K562 (cell line): ENCODE measurements at regions of chr16 and their contacts with region 1.

Region 1: GRCh38 chr16:56332464-56333079 is 92.8 kb downstream of the AMFR start:
- DNase-seq: peak; percentile 62 to 81 (median 69)
- ATAC-seq: peak; percentile 96
- H3K4me3 ChIP-seq: no peak overlapping the region
- H3K27ac ChIP-seq: no peak overlapping the region
- H3K4me1 ChIP-seq: peaks cover 0 to 22% of the 10 kb centered on the region in 2 experiments; a peak in 1 of 5 replicates
- H3K27me3 ChIP-seq: peaks cover 26 to 71% of the 10 kb centered on the region in 2 experiments; a peak in 3 of 5 replicates
- CTCF ChIP-seq: peak; percentile 79 to 84 (median 81)
- EP300 ChIP-seq: no peak
- POLR2A ChIP-seq: no peak
- RAD21 ChIP-seq: peak; percentile 76 to 92

Region 2: DNA sequence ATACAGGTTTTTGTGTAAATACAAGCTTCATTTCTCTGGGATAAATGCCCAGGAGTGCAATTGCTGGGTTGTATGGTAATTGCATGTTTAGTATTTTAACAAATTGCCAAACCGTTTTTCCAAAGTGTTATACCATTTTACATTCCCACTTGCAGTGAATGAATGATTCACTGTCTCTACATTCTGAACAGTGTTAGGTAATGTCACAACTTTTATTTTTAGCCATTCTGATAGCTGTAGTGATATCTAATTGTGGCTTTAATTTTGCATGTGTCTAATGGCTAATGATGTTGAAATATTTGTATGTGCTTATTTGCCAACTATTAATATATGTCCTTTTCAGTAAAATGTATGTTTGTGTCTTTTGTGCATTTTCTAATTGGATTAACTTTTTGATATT is 300.5 kb before region 1 on chr16:
- CTCF ChIA-PET with region 1: no interaction called
- POLR2A ChIA-PET with region 1: no interaction called
- in situ Hi-C with region 1: no loop called
- intact Hi-C with region 1: no loop called
- DNase-seq: no peak
- ATAC-seq: no peak
- H3K4me3 ChIP-seq: no peak overlapping the region
- H3K27ac ChIP-seq: no peak overlapping the region
- H3K4me1 ChIP-seq: no peaks in the 10 kb centered on the region
- H3K27me3 ChIP-seq: no peaks in the 10 kb centered on the region
- CTCF ChIP-seq: no peak
- EP300 ChIP-seq: no peak
- POLR2A ChIP-seq: no peak
- RAD21 ChIP-seq: no peak

Region 3: DNA sequence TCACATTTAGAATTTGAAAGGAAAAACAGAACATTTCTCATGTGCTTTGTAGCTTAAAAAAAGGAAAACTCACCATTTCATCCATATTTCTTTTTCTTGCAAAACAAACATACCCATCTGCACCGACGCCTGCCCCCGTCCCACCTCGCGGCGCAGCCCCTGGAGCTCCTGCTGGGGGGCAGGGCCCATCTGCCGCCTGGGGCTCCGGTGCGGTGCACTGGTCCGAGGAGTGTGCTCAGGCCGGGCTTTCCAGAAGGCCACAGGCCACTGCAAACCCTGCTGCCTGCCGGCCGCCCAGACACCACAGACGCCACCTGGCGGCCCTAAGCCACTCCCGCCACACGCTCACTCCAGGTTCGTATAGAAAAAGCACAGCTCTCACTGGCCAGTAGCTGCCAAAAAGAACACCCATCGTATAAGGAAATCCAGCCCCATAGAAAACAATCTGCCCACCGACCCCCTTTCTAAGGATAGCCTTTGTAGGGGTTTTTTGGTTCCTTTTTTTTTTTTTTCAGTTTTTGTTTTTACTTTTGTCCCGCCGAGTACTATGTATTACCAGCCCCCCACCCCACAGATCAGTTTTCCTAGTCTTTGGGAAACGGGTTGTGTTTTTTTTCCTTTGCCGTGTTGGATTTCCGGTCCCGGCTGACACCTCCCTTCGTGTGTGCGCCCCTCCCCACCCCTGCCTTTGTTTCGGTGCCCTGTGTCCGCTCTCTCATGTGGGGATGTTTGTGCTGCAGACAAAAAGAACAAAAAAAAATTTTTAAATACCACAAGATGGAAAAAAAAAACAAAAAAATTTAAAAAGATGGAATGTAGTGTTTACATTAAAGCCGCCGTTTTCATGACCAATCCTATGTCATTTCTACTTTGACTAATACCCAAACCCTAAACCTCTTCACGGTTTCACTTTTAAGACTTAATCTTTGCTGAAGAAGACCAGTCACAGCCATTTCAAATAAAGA is 24.0 kb after region 1 on chr16:
- CTCF ChIA-PET with region 1: interaction called, 20 read pairs
- POLR2A ChIA-PET with region 1: no interaction called
- in situ Hi-C with region 1: no loop called
- intact Hi-C with region 1: loop called (anchors 1 kb)
- DNase-seq: peak; percentile 80 to 88 (median 84)
- ATAC-seq: peak; percentile 98
- H3K4me3 ChIP-seq: no peak overlapping the region
- H3K27ac ChIP-seq: peak overlapping the region; percentile 47; the same call in 2 of the 3 replicates
- H3K4me1 ChIP-seq: peaks cover 11 to 28% of the 10 kb centered on the region in 2 experiments
- H3K27me3 ChIP-seq: peaks cover 3 to 12% of the 10 kb centered on the region in 2 experiments; a peak in 3 of 5 replicates
- CTCF ChIP-seq: peak; percentile 88 to 94 (median 92)
- EP300 ChIP-seq: no peak
- POLR2A ChIP-seq: no peak
- RAD21 ChIP-seq: peak; percentile 72 to 80

Region 4: GRCh38 chr16:56425439-56425832 is 92.9 kb after region 1 on chr16 and contains the start of gene AMFR:
- CTCF ChIA-PET with region 1: no interaction called
- POLR2A ChIA-PET with region 1: no interaction called
- in situ Hi-C with region 1: no loop called
- intact Hi-C with region 1: loop called (anchors 5 kb)
- DNase-seq: peak; percentile 87 to 93 (median 92)
- ATAC-seq: peak; percentile 92
- H3K4me3 ChIP-seq: peak within 1 kb of the TSS; percentile 90
- H3K27ac ChIP-seq: peak within 1 kb of the TSS; percentile 85
- H3K4me1 ChIP-seq: peaks cover 23 to 37% of the 10 kb centered on the region in 2 experiments
- H3K27me3 ChIP-seq: no peaks in the 10 kb centered on the region
- CTCF ChIP-seq: peak in 2 of 3 experiments; percentile 57 to 82; a peak in 4 of 6 replicates
- EP300 ChIP-seq: no peak
- POLR2A ChIP-seq: no peak
- RAD21 ChIP-seq: peak in 1 of 2 experiments; percentile 52; a peak in 2 of 4 replicates
- polyA plus RNA-seq, gene AMFR: 15.6 to 27.3 TPM

Region 5: DNA sequence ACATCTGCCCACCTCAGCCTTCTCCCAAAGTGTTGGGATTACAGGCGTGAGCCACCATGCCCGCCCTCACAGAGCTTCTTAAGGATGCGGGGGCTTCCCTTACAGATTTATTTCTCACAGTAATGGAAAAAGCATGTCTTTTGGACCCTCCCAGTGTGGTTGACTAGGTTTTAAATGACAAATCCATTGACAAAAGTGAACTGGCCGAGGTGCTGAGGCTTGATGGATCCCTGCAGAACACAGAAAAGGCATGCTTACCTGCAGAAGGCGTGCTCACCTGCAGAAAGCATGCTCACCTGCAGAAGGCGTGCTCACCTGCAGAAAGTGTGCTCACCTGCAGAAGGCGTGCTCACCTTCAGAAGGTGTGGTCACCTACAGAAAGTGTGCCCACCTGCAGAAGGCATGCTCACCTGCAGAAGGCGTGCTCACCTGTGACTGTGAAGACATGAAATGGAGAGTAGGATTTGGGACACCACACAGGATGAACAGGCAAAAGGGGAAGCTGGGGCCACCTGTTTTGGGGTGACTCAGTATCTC is 202.3 kb after region 1 on chr16:
- CTCF ChIA-PET with region 1: no interaction called
- POLR2A ChIA-PET with region 1: no interaction called
- in situ Hi-C with region 1: no loop called
- intact Hi-C with region 1: loop called (anchors 5 kb)
- DNase-seq: no peak
- ATAC-seq: no peak
- H3K4me3 ChIP-seq: no peak overlapping the region
- H3K27ac ChIP-seq: no peak overlapping the region
- H3K4me1 ChIP-seq: peaks cover 0 to 3% of the 10 kb centered on the region in 2 experiments; a peak in 1 of 5 replicates
- H3K27me3 ChIP-seq: peaks cover 12 to 37% of the 10 kb centered on the region in 2 experiments; a peak in 3 of 5 replicates
- CTCF ChIP-seq: no peak
- EP300 ChIP-seq: no peak
- POLR2A ChIP-seq: no peak
- RAD21 ChIP-seq: no peak

Region 6: DNA sequence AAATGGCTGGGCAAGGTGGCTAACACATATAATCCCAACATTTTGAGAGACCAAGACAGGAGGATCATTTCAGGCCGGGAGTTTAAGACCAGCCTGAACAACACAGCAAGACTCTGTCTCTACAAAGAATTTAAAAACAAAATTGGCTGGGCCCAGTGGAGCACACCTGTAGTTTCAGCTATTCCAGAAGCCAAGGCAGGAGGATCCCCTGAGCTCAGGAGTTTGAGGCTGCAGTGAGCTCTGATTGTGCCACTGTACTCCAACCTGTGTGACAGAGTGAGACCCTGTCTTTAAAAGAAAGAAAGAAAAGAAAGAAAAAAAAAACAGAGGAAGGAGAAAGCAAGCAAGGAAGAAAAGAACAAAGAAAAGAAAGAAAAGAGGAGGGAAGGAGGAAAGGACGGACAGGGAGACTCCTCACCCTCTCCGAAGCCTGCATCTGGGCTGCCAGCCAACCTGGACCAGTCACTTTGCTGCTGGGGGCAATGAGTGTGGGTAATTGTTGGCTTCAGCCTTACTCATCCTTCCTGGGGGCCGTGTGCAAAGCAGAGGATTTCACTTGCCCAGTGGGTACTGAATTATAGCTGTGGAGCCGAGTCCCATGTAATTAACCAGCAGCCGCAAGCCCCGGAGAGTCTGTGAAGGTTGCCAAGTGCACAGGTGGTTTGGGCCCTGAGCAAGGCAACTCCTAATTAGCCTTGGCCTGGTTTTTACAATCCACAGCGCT is 225.6 kb after region 1 on chr16:
- CTCF ChIA-PET with region 1: no interaction called
- POLR2A ChIA-PET with region 1: no interaction called
- in situ Hi-C with region 1: no loop called
- intact Hi-C with region 1: loop called (anchors 5 kb)
- DNase-seq: no peak
- ATAC-seq: no peak
- H3K4me3 ChIP-seq: no peak overlapping the region
- H3K27ac ChIP-seq: no peak overlapping the region
- H3K4me1 ChIP-seq: no peaks in the 10 kb centered on the region
- H3K27me3 ChIP-seq: peaks cover 31 to 51% of the 10 kb centered on the region in 2 experiments; a peak in 4 of 5 replicates
- CTCF ChIP-seq: no peak
- EP300 ChIP-seq: no peak
- POLR2A ChIP-seq: no peak
- RAD21 ChIP-seq: no peak

Region 7: DNA sequence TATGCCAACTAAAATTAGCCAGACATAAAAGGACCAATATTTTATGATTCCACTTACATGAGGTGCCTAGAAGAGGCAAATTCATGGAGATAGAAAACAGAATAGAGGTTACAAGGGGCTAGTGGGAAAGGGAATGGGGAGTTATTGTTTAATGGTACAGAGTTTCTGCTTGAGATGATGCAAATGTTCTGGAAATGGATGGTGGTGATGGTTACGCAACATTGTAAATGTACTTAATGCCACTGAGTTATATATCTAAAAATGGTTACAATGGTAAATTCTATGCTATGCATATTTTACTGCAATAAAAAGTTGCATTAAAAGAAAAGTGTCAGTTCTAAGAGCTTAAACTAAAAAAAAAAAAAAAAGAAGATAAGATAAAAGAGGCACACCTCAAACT is 367.6 kb after region 1 on chr16:
- CTCF ChIA-PET with region 1: interaction called, 3 read pairs
- POLR2A ChIA-PET with region 1: interaction called, 3 read pairs
- in situ Hi-C with region 1: no loop called
- intact Hi-C with region 1: loop called (anchors 1 kb)
- DNase-seq: no peak
- ATAC-seq: no peak
- H3K4me3 ChIP-seq: no peak overlapping the region
- H3K27ac ChIP-seq: no peak overlapping the region
- H3K4me1 ChIP-seq: no peaks in the 10 kb centered on the region
- H3K27me3 ChIP-seq: peaks cover 0 to 25% of the 10 kb centered on the region in 2 experiments; a peak in 2 of 5 replicates
- CTCF ChIP-seq: no peak
- EP300 ChIP-seq: no peak
- POLR2A ChIP-seq: no peak
- RAD21 ChIP-seq: no peak